Heart left ventricle (tissue), 16 donors: ENCODE measurements at regions of chr3 and their contacts with region 1.

Region 1: GRCh38 chr3:140941434-140942220 is at the start of gene SLC25A36:
- DNase-seq: peak; percentile 97 to 99 (median 98)
- ATAC-seq: peak; percentile 98 to 100 (median 99)
- H3K4me3 ChIP-seq: peak within 1 kb of the TSS; percentile 54 to 98 (median 86)
- H3K27ac ChIP-seq: peak within 1 kb of the TSS; percentile 91 to 98 (median 96)
- H3K4me1 ChIP-seq: peaks cover 3 to 38% (median 34%) of the 10 kb centered on the region in 12 donors
- H3K27me3 ChIP-seq: no peaks in the 10 kb centered on the region
- CTCF ChIP-seq: peak in 2 of 12 donors; percentile 20 to 22
- POLR2A ChIP-seq: peak in 1 of 2 donors; percentile 97
- total RNA-seq, gene SLC25A36: 48.1 to 78.0 (median 63.0) TPM

Region 2: DNA sequence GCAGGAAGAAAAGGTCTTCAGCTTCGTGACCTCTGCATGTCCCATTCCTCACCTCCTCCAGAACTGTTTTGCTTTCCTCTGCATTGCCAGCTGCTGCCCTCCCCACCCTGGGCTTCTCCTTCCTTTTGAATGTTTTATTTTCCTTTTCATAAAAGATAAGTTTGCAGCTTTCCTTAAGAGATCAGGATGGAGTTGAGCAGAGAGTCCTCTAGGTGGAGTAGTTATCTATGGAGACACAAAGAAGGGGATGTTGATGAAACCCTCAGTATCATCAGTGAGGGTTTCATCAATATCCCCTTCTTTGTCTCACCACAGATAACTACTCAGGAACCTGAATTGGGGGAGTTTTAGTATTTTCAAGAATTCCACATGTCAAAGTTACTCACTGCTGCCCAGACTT is 19.0 kb before region 1 on chr3:
- intact Hi-C with region 1: loop called in 3 of 10 experiments (anchors 2 kb)
- DNase-seq: no peak
- ATAC-seq: no peak
- H3K4me3 ChIP-seq: no peak overlapping the region
- H3K27ac ChIP-seq: no peak overlapping the region
- H3K4me1 ChIP-seq: peaks cover 0 to 21% (median 0%) of the 10 kb centered on the region in 12 donors
- H3K27me3 ChIP-seq: peaks cover 0 to under 1% (median 0%) of the 10 kb centered on the region in 9 donors
- CTCF ChIP-seq: peak in 9 of 12 donors; percentile 14 to 41 (median 31)
- POLR2A ChIP-seq: no peak